ENCODE measurements at regions of chr3 and their contacts with region 1.

Region 1: DNA sequence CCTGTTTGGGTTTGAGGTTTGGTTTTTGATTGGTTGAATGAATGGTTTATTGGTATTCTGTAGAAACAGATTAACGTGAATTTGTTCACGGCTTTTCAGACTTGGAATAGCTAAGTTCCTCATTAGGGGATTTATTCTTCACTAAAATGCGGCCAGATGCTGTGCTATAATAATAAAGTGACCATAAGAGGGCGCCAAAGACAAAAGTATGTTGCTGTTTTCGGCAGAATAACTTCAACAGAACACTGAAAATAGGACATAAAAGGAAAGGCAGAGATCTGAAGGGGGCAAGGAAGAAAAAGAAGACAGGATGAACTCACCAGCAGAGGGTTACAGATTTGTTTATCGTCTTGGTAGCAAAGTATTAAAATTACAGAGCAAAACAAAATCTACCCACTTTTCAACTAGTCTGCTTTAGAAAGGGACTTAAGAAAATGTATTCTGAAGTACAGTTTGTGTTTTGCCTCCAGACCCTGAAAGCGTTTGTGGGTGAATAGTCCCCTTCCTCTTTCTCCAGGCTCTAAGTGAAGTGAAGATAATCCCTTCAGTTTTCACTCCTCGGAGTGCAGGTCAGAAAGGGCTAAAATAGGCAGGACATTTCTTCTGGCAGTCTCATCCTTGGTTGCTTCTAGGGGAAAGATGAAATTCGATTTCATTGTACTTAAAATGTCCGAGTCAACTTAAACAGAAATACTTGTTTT is 147.6 kb downstream of the IL20RB start:
- DNase-seq: peak in 2 of 9 experiments; percentile 43 to 57
- ATAC-seq: no peak
- H3K4me3 ChIP-seq: no peak overlapping the region
- H3K4me3 Mint-ChIP-seq: no peak overlapping the region
- H3K27ac ChIP-seq: no peak overlapping the region
- H3K27ac Mint-ChIP-seq: no peak overlapping the region
- H3K4me1 ChIP-seq: no peaks in the 10 kb centered on the region
- H3K4me1 Mint-ChIP-seq: no peaks in the 10 kb centered on the region
- H3K27me3 ChIP-seq: no peaks in the 10 kb centered on the region
- H3K27me3 Mint-ChIP-seq: peaks cover 18% of the 10 kb centered on the region
- CTCF ChIP-seq: peak; percentile 53

Region 2: GRCh38 chr3:137946345-137946973 is 841.0 kb after region 1 on chr3:
- CTCF ChIA-PET with region 1: interaction called, 31 read pairs
- POLR2A ChIA-PET with region 1: no interaction called
- intact Hi-C with region 1: loop called (anchors 1 to 2 kb)
- DNase-seq: peak in 8 of 9 experiments; percentile 24 to 69 (median 44)
- ATAC-seq: no peak
- H3K4me3 ChIP-seq: no peak overlapping the region
- H3K4me3 Mint-ChIP-seq: no peak overlapping the region
- H3K27ac ChIP-seq: no peak overlapping the region
- H3K27ac Mint-ChIP-seq: no peak overlapping the region
- H3K4me1 ChIP-seq: no peaks in the 10 kb centered on the region
- H3K4me1 Mint-ChIP-seq: no peaks in the 10 kb centered on the region
- H3K27me3 ChIP-seq: no peaks in the 10 kb centered on the region
- H3K27me3 Mint-ChIP-seq: no peaks in the 10 kb centered on the region
- CTCF ChIP-seq: peak; percentile 65

Region 3: DNA sequence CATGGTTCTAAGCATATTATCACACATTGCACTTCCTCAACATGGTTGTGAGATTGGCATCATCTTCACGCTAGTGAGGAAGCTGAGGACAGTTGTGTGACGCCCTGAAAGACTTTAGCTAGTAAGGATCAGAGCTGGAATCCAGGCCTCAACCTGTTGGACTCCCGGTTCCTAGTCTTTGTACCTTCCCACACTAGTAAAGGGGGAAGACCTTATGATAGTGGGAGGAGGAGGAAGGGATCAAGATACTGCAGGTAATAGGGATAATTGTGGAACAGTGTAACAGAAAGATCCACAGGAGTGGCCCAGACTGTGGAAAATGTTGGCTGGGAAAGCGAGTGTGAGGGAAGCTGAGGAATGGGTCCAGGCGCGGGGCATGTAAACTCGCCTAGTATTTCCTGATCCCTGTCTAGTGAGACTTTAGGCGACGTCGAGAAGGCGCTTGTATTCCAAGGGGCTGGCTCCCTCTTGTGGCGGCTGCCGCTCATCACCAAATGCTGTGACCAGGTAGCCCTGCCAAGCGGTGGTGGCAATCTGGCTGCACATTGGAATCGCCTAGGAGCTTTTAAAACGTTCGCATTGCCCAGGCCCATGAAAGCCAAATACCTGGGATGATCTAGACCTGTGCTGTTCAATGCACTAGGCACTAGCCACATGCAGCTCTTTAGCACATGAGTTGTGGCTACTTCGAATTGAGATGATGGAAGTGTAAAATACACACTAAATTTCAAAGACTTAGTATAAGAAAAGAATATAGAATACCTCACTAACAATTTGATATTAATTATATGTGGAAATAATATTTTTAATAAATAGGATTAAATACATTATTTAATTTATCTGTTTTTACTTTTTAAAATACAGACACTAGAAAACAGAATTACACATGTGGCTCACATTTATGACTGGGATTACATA is 865.7 kb after region 1 on chr3:
- CTCF ChIA-PET with region 1: no interaction called
- POLR2A ChIA-PET with region 1: no interaction called
- intact Hi-C with region 1: loop called in 1 of 2 experiments (anchors 5 kb)
- DNase-seq: peak in 8 of 9 experiments; percentile 4 to 50 (median 32)
- ATAC-seq: no peak
- H3K4me3 ChIP-seq: no peak overlapping the region
- H3K4me3 Mint-ChIP-seq: no peak overlapping the region
- H3K27ac ChIP-seq: no peak overlapping the region
- H3K27ac Mint-ChIP-seq: no peak overlapping the region
- H3K4me1 ChIP-seq: no peaks in the 10 kb centered on the region
- H3K4me1 Mint-ChIP-seq: no peaks in the 10 kb centered on the region
- H3K27me3 ChIP-seq: peaks cover 0 to 3% of the 10 kb centered on the region in 2 experiments
- H3K27me3 Mint-ChIP-seq: peaks cover 14% of the 10 kb centered on the region
- CTCF ChIP-seq: peak; percentile 61